ENCODE measurements at regions of chr5 and their contacts with region 1.

Region 1: GRCh38 chr5:61331407-61332357 is at the start of gene ZSWIM6:
- DNase-seq: peak; percentile 98 to 100 (median 99)
- ATAC-seq: peak; percentile 82
- H3K4me3 ChIP-seq: peak within 1 kb of the TSS; percentile 93 to 94
- H3K4me3 Mint-ChIP-seq: peak within 1 kb of the TSS; percentile 95
- H3K27ac ChIP-seq: peak within 1 kb of the TSS; percentile 84 to 93
- H3K27ac Mint-ChIP-seq: peak within 1 kb of the TSS; percentile 97
- H3K4me1 ChIP-seq: peaks cover 20% of the 10 kb centered on the region
- H3K4me1 Mint-ChIP-seq: peaks cover 51% of the 10 kb centered on the region
- H3K27me3 ChIP-seq: no peaks in the 10 kb centered on the region
- H3K27me3 Mint-ChIP-seq: peaks cover 14% of the 10 kb centered on the region
- CTCF ChIP-seq: no peak
- total RNA-seq, gene ZSWIM6: 3.9 to 4.1 TPM

Region 2: DNA sequence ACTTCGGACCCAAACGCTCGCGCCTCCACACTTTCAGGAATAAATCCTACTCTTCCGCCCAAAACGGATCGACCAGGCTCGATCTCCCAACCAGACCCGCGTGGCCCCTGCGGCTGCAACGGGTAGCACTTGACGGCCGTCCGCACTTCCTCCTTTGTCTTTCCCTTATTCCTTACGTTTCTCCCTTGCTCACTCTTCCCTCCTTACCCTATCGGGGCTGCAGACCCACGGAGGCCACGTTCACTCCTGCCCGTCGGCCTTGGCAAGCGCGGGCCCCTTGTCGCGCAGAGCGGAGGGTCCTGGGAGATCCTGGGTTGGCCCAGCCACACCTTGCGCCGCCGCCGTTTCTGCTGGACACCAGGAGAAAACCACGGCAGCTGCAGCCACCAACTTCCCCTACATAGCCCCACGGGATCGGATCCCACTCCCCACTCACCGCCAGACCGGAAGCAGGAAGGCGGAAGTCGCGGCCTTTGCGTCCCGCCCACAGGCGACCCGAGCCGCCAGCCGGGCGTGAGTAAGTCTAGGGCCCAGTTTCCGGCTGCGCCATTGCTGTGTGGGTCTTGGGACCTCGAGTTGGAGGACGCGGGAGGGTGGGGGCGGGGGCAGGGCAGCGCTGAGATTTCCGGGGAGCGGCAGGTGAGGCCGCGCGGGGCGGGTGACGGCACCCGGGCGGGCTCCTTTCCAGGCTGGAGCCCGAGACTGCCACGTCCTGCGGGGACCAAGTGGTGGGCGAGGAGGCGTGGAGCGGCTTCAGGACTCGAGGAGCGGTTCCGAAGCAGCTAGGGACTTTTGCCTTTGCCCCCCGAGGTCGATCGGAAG is 169.5 kb before region 1 on chr5 and contains the start of gene SMIM15:
- CTCF ChIA-PET with region 1: interaction called, 3 read pairs
- POLR2A ChIA-PET with region 1: interaction called, 7 read pairs
- intact Hi-C with region 1: loop called (anchors 1 to 2 kb)
- DNase-seq: peak; percentile 57 to 88 (median 79)
- ATAC-seq: peak; percentile 88
- H3K4me3 ChIP-seq: peak within 1 kb of the TSS; percentile 86 to 90
- H3K4me3 Mint-ChIP-seq: peak within 1 kb of the TSS; percentile 95
- H3K27ac ChIP-seq: peak within 1 kb of the TSS; percentile 70 to 79
- H3K27ac Mint-ChIP-seq: peak within 1 kb of the TSS; percentile 96
- H3K4me1 ChIP-seq: peaks cover 18% of the 10 kb centered on the region
- H3K4me1 Mint-ChIP-seq: peaks cover 50% of the 10 kb centered on the region
- H3K27me3 ChIP-seq: no peaks in the 10 kb centered on the region
- H3K27me3 Mint-ChIP-seq: no peaks in the 10 kb centered on the region
- CTCF ChIP-seq: no peak
- total RNA-seq, gene SMIM15: 22.6 to 24.8 TPM

Region 3: GRCh38 chr5:61280205-61280604 is 51.5 kb before region 1 on chr5:
- CTCF ChIA-PET with region 1: no interaction called
- POLR2A ChIA-PET with region 1: interaction called, 5 read pairs
- intact Hi-C with region 1: loop called in 1 of 2 experiments (anchors 5 kb)
- DNase-seq: peak in 3 of 9 experiments; percentile 7 to 31 (median 11)
- ATAC-seq: peak; percentile 41
- H3K4me3 ChIP-seq: no peak overlapping the region
- H3K4me3 Mint-ChIP-seq: no peak overlapping the region
- H3K27ac ChIP-seq: no peak overlapping the region
- H3K27ac Mint-ChIP-seq: no peak overlapping the region
- H3K4me1 ChIP-seq: peaks cover 4% of the 10 kb centered on the region
- H3K4me1 Mint-ChIP-seq: peaks cover 17% of the 10 kb centered on the region
- H3K27me3 ChIP-seq: no peaks in the 10 kb centered on the region
- H3K27me3 Mint-ChIP-seq: no peaks in the 10 kb centered on the region
- CTCF ChIP-seq: no peak

Region 4: DNA sequence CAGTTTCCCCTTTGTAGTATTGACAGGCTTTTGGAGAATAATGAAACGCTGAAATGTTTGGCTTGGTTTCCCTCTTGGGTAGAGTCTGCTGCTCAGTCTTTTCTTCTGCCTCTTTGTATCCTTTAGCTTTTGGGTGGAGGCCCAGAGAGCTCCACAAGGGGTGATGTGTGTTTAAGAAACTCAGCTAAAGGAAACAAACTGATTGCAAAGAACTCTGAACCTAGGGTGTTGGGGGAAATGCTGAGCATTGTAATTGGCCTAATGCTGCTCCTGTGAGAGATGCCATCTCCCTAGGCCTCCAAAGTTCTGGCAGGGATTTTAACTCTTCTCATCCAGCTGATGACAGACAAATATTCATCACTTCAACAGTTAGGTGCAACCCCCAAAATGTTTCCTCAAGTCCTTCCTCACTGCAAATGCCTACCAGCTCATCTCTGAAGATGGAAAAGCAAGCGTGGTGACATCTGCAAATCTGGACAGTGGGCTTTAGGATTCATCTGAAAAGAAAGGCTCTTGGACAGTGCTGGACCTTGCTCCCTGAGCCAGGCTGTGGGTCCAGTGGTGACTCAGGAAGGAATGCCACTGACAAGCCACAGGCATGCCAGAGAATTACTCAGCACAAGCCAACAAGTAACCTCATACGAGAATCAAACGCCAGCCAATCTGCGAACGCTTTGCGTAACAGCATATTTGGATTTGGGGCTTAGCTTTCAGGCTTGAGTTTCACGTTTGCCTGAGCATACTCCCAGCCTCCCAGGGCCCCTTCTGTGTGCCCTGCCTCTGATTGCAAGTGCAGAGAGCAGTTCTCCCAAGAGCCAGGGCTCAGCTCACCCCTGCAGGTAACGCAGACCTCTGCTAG is 30.1 kb before region 1 on chr5:
- CTCF ChIA-PET with region 1: no interaction called
- POLR2A ChIA-PET with region 1: no interaction called
- intact Hi-C with region 1: no loop called
- DNase-seq: no peak
- ATAC-seq: no peak
- H3K4me3 ChIP-seq: no peak overlapping the region
- H3K4me3 Mint-ChIP-seq: no peak overlapping the region
- H3K27ac ChIP-seq: no peak overlapping the region
- H3K27ac Mint-ChIP-seq: no peak overlapping the region
- H3K4me1 ChIP-seq: no peaks in the 10 kb centered on the region
- H3K4me1 Mint-ChIP-seq: no peaks in the 10 kb centered on the region
- H3K27me3 ChIP-seq: peaks cover 0 to 3% of the 10 kb centered on the region in 2 experiments
- H3K27me3 Mint-ChIP-seq: peaks cover 10% of the 10 kb centered on the region
- CTCF ChIP-seq: no peak

Region 5: DNA sequence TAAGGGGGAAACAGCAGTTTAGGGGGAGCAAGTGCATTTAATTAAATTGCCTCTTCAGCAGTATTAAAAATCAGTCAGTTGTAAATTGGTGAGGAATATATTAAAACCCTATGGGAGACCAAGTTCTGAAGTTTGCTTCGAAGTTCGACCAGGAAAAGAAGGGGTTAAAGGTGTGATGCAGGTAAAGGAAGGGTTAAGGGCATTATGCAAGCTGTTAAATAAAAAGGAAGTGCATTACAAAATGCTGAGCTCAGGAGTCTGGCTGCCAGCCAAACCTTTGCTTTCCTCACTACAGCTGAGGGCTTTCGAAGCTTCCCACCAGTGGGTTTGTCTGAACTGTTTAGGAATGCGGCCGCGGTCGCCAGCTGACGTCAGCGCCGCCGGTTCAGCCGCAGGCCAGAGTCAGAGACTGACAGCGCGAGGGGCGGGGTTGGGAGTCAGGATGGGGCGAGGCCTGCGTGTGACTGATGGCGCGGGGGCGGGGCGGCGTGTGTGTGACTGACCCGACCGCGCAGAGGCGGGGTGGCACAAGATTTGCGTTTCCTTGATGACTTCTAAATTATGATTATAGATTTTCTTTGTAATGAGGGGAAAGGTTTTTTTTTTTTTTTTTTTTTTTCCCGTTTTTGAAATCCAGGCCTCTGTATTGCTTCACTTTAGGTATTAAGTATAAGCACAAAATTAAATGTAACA is 76.9 kb after region 1 on chr5:
- CTCF ChIA-PET with region 1: interaction called, 5 read pairs
- POLR2A ChIA-PET with region 1: interaction called, 18 read pairs
- intact Hi-C with region 1: loop called (anchors 1 kb)
- DNase-seq: peak; percentile 94 to 100 (median 98)
- ATAC-seq: peak; percentile 97
- H3K4me3 ChIP-seq: peak overlapping the region; percentile 2 to 30
- H3K4me3 Mint-ChIP-seq: peak overlapping the region; percentile 73
- H3K27ac ChIP-seq: peak overlapping the region in 1 of 2 experiments; percentile 53
- H3K27ac Mint-ChIP-seq: peak overlapping the region; percentile 64
- H3K4me1 ChIP-seq: peaks cover 16% of the 10 kb centered on the region
- H3K4me1 Mint-ChIP-seq: peaks cover 30% of the 10 kb centered on the region
- H3K27me3 ChIP-seq: no peaks in the 10 kb centered on the region
- H3K27me3 Mint-ChIP-seq: no peaks in the 10 kb centered on the region
- CTCF ChIP-seq: no peak

Region 6: GRCh38 chr5:62412537-62413329 is 1081.1 kb after region 1 on chr5 and contains the start of gene IPO11:
- CTCF ChIA-PET with region 1: no interaction called
- POLR2A ChIA-PET with region 1: no interaction called
- intact Hi-C with region 1: loop called (anchors 2 to 10 kb)
- DNase-seq: peak; percentile 97 to 100 (median 99)
- ATAC-seq: peak; percentile 96
- H3K4me3 ChIP-seq: peak within 1 kb of the TSS; percentile 78 to 98
- H3K4me3 Mint-ChIP-seq: peak within 1 kb of the TSS; percentile 88
- H3K27ac ChIP-seq: peak within 1 kb of the TSS; percentile 80 to 84
- H3K27ac Mint-ChIP-seq: peak within 1 kb of the TSS; percentile 88
- H3K4me1 ChIP-seq: peaks cover 14% of the 10 kb centered on the region
- H3K4me1 Mint-ChIP-seq: peaks cover 30% of the 10 kb centered on the region
- H3K27me3 ChIP-seq: no peaks in the 10 kb centered on the region
- H3K27me3 Mint-ChIP-seq: no peaks in the 10 kb centered on the region
- CTCF ChIP-seq: no peak
- total RNA-seq, gene IPO11: 17.0 to 17.2 TPM

Measured in CD8-positive, alpha-beta T cell (primary cell).